SK-N-SH (cell line): ENCODE measurements at regions of chr10 and their contacts with region 1.

Region 1: DNA sequence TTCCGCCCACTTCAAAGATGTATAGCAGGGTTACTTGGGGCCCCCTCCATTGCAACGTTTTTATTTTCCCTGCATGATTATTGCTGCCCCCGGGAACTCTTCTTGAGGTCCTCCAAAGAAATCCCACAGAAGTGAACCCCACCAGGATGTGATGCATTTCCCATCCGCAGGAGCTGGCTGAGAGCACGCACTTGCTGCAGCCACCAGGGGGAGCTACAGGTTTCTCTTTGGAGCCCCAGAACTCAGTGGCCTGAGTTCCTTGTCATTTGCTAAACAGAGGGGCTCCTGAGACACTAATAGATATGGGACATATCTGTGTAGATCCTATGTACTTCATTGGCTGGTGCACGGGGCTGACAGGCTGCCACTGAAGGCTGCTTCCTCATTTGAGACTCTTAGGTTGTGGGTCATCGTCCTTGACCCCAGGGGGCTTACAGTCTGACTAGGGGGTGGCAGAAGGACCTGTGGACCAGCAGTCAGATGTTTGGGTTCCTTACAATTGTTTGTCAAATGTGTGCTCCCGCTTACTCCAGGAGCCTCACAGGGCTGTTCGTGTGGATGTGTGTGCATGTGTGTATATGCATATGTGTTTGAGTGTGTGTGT is 52.3 kb upstream of the ENO4 start:
- DNase-seq: peak; percentile 87
- H3K4me3 ChIP-seq: no peak overlapping the region
- H3K27ac ChIP-seq: no peak overlapping the region
- H3K4me1 ChIP-seq: no peaks in the 10 kb centered on the region
- H3K27me3 ChIP-seq: no peaks in the 10 kb centered on the region
- CTCF ChIP-seq: peak; percentile 97
- EP300 ChIP-seq: no peak
- RAD21 ChIP-seq: peak; percentile 97

Region 2: GRCh38 chr10:116737627-116738327 is 59.2 kb before region 1 on chr10:
- CTCF ChIA-PET with region 1: no interaction called
- POLR2A ChIA-PET with region 1: no interaction called
- DNase-seq: peak; percentile 87
- H3K4me3 ChIP-seq: no peak overlapping the region
- H3K27ac ChIP-seq: peak overlapping the region in 1 of 2 experiments; percentile 80; a peak in 2 of 4 replicates
- H3K4me1 ChIP-seq: peaks cover 0 to 37% of the 10 kb centered on the region in 2 experiments; a peak in 2 of 4 replicates
- H3K27me3 ChIP-seq: no peaks in the 10 kb centered on the region
- CTCF ChIP-seq: peak; percentile 36
- EP300 ChIP-seq: 0 out of 4 replicates have a peak, but pooled peaks of 1 of the 2 experiments have one; percentile 16
- RAD21 ChIP-seq: peak; percentile 43

Region 3: GRCh38 chr10:116809483-116810119 is 12.6 kb after region 1 on chr10:
- CTCF ChIA-PET with region 1: interaction called, 35 read pairs
- POLR2A ChIA-PET with region 1: no interaction called
- DNase-seq: peak; percentile 70
- H3K4me3 ChIP-seq: no peak overlapping the region
- H3K27ac ChIP-seq: no peak overlapping the region
- H3K4me1 ChIP-seq: no peaks in the 10 kb centered on the region; a peak in 1 of 4 replicates
- H3K27me3 ChIP-seq: peaks cover 3% of the 10 kb centered on the region; the same call in 1 of the 2 replicates
- CTCF ChIP-seq: peak; percentile 54
- EP300 ChIP-seq: no peak
- RAD21 ChIP-seq: 0 out of 2 replicates have a peak, but pooled peaks have one; percentile 8

Region 4: GRCh38 chr10:117137031-117137910 is 340.3 kb after region 1 on chr10:
- CTCF ChIA-PET with region 1: interaction called, 13 read pairs
- POLR2A ChIA-PET with region 1: no interaction called
- DNase-seq: peak; percentile 74
- H3K4me3 ChIP-seq: peak overlapping the region; percentile 14 to 39; a peak in 3 of 4 replicates
- H3K27ac ChIP-seq: no peak overlapping the region
- H3K4me1 ChIP-seq: peaks cover 0 to 2% of the 10 kb centered on the region in 2 experiments; a peak in 2 of 4 replicates
- H3K27me3 ChIP-seq: peaks cover 94% of the 10 kb centered on the region
- CTCF ChIP-seq: no peak
- EP300 ChIP-seq: no peak
- RAD21 ChIP-seq: no peak